ENCODE measurements at regions of chr5 and their contacts with region 1.

Region 1: GRCh38 chr5:62783374-62784057 is 204.9 kb downstream of the LRRC70 start:
- DNase-seq: no peak
- H3K4me3 ChIP-seq: no peak overlapping the region
- H3K27ac ChIP-seq: no peak overlapping the region
- H3K4me1 ChIP-seq: no peaks in the 10 kb centered on the region
- H3K27me3 ChIP-seq: no peaks in the 10 kb centered on the region
- CTCF ChIP-seq: no peak
- POLR2A ChIP-seq: no peak

Region 2: GRCh38 chr5:61347080-61347479 is 1436.4 kb before region 1 on chr5:
- intact Hi-C with region 1: no loop called
- DNase-seq: no peak
- H3K4me3 ChIP-seq: no peak overlapping the region
- H3K27ac ChIP-seq: no peak overlapping the region
- H3K4me1 ChIP-seq: no peaks in the 10 kb centered on the region
- H3K27me3 ChIP-seq: no peaks in the 10 kb centered on the region
- CTCF ChIP-seq: no peak
- POLR2A ChIP-seq: no peak

Region 3: GRCh38 chr5:62029303-62029702 is 754.2 kb before region 1 on chr5:
- intact Hi-C with region 1: no loop called
- DNase-seq: no peak
- H3K4me3 ChIP-seq: no peak overlapping the region
- H3K27ac ChIP-seq: no peak overlapping the region
- H3K4me1 ChIP-seq: no peaks in the 10 kb centered on the region
- H3K27me3 ChIP-seq: no peaks in the 10 kb centered on the region
- CTCF ChIP-seq: no peak
- POLR2A ChIP-seq: no peak

Region 4: DNA sequence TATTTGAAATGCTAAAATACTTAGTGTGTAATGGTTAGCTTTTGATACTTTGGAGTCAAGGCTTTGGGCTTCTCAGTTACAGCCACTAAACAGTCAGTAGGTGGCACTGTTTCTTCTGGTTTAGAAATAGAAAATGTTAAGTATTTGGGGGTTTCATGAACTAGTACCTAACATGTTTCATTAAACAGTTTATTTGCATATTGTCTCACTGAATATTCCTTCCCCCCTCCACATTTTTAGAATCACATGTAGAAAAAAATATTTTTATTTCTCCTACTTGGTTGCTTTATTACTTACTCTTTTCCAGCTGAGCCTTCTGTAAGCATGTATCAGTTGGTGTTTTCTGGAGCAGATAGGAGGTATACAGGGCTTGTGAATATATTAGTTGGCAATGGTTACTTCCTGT is 322.9 kb before region 1 on chr5:
- intact Hi-C with region 1: loop called (anchors 10 kb)
- DNase-seq: no peak
- H3K4me3 ChIP-seq: no peak overlapping the region
- H3K27ac ChIP-seq: peak overlapping the region in 1 of 2 donors; percentile 46
- H3K4me1 ChIP-seq: no peaks in the 10 kb centered on the region
- H3K27me3 ChIP-seq: no peaks in the 10 kb centered on the region
- CTCF ChIP-seq: peak; percentile 67 to 75 (median 72)
- POLR2A ChIP-seq: no peak

Region 5: DNA sequence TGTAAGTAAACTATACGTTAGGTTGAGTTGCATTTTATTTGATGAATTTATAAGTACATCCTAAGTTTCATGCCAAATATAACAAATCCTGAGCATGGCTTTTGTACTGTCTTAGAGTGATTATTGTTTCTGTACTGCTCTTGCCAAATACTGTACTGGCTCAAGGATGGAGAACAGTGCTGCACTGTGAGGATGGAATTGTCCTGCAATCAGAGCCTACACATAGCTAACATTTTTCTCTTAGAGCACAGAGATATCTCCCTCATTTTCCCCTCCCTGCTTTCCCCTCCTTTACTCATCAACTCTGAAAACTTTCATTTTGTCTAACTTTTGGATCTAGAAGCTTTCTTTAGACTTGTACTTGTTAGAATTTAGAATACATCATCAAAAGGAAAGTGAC is 176.6 kb before region 1 on chr5:
- intact Hi-C with region 1: no loop called
- DNase-seq: peak; percentile 34
- H3K4me3 ChIP-seq: no peak overlapping the region
- H3K27ac ChIP-seq: no peak overlapping the region
- H3K4me1 ChIP-seq: no peaks in the 10 kb centered on the region
- H3K27me3 ChIP-seq: no peaks in the 10 kb centered on the region
- CTCF ChIP-seq: no peak
- POLR2A ChIP-seq: no peak

Region 6: DNA sequence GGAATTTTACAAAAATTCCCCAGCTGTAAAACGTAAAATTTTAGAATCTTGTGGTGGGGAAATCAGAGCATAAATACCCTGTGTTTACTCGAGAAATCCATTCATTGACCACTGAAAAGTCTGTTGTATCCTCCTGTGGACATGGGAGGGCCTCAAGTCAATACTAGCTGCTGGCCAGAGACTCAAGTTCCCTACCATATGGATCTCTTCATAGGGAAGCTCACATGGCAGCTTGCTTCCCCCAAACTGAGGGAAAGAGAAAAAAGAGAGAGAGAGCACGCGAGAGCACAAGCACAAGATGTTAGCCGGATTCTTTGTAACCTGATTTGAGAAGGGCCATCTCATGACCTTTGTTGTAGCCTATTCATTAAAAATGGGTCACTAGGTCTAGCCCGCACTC is 387.0 kb after region 1 on chr5:
- intact Hi-C with region 1: no loop called
- DNase-seq: no peak
- H3K4me3 ChIP-seq: no peak overlapping the region
- H3K27ac ChIP-seq: no peak overlapping the region
- H3K4me1 ChIP-seq: no peaks in the 10 kb centered on the region
- H3K27me3 ChIP-seq: no peaks in the 10 kb centered on the region
- CTCF ChIP-seq: no peak
- POLR2A ChIP-seq: no peak